T-cell (primary cell): ENCODE measurements at regions of chr12 and their contacts with region 1.

Region 1: GRCh38 chr12:54497883-54498282 is 331 bp downstream of the NCKAP1L start:
- DNase-seq: peak in 1 of 35 experiments; percentile 1
- ATAC-seq: peak in 3 of 4 experiments; percentile 1 to 13 (median 3)
- H3K4me3 ChIP-seq: peak overlapping the region; percentile 62 to 85
- H3K4me3 Mint-ChIP-seq: peak overlapping the region; percentile 97 to 99 (median 98)
- H3K27ac ChIP-seq: peak overlapping the region; percentile 50
- H3K27ac Mint-ChIP-seq: peak overlapping the region; percentile 98
- H3K4me1 ChIP-seq: peaks cover 28 to 30% of the 10 kb centered on the region in 2 experiments
- H3K4me1 Mint-ChIP-seq: peaks cover 45 to 56% (median 49%) of the 10 kb centered on the region in 3 donors
- H3K27me3 ChIP-seq: no peaks in the 10 kb centered on the region
- H3K27me3 Mint-ChIP-seq: no peaks in the 10 kb centered on the region

Region 2: GRCh38 chr12:54214553-54215406 is 283.1 kb before region 1 on chr12:
- CTCF ChIA-PET with region 1: no interaction called
- POLR2A ChIA-PET with region 1: interaction called in 1 of 2 experiments, 10 read pairs
- DNase-seq: peak; percentile 72 to 97 (median 87)
- ATAC-seq: peak; percentile 80 to 91 (median 84)
- H3K4me3 ChIP-seq: peak overlapping the region; percentile 42
- H3K4me3 Mint-ChIP-seq: peak overlapping the region; percentile 64 to 87 (median 73)
- H3K27ac ChIP-seq: no peak overlapping the region
- H3K27ac Mint-ChIP-seq: peak overlapping the region in 1 of 2 donors; percentile 46
- H3K4me1 ChIP-seq: peaks cover 25 to 39% of the 10 kb centered on the region in 2 experiments
- H3K4me1 Mint-ChIP-seq: peaks cover 31 to 51% (median 42%) of the 10 kb centered on the region in 3 donors
- H3K27me3 ChIP-seq: peaks cover 0 to 36% of the 10 kb centered on the region in 2 experiments
- H3K27me3 Mint-ChIP-seq: peaks cover 6 to 19% of the 10 kb centered on the region in 2 donors

Region 3: GRCh38 chr12:54279866-54280467 is 217.9 kb before region 1 on chr12 and contains the start of gene CBX5:
- CTCF ChIA-PET with region 1: interaction called, 6 to 11 read pairs
- POLR2A ChIA-PET with region 1: no interaction called
- DNase-seq: peak; percentile 98 to 100 (median 99)
- ATAC-seq: peak; percentile 55 to 59 (median 56)
- H3K4me3 ChIP-seq: peak within 1 kb of the TSS; percentile 78 to 87
- H3K4me3 Mint-ChIP-seq: no peak within 1 kb of the TSS
- H3K27ac ChIP-seq: peak within 1 kb of the TSS; percentile 98
- H3K27ac Mint-ChIP-seq: no peak within 1 kb of the TSS
- H3K4me1 ChIP-seq: peaks cover 35 to 48% of the 10 kb centered on the region in 2 experiments
- H3K4me1 Mint-ChIP-seq: peaks cover 19 to 51% (median 23%) of the 10 kb centered on the region in 3 donors
- H3K27me3 ChIP-seq: no peaks in the 10 kb centered on the region
- H3K27me3 Mint-ChIP-seq: no peaks in the 10 kb centered on the region
- total RNA-seq, gene CBX5: 43.8 to 54.5 (median 47.1) TPM

Region 4: DNA sequence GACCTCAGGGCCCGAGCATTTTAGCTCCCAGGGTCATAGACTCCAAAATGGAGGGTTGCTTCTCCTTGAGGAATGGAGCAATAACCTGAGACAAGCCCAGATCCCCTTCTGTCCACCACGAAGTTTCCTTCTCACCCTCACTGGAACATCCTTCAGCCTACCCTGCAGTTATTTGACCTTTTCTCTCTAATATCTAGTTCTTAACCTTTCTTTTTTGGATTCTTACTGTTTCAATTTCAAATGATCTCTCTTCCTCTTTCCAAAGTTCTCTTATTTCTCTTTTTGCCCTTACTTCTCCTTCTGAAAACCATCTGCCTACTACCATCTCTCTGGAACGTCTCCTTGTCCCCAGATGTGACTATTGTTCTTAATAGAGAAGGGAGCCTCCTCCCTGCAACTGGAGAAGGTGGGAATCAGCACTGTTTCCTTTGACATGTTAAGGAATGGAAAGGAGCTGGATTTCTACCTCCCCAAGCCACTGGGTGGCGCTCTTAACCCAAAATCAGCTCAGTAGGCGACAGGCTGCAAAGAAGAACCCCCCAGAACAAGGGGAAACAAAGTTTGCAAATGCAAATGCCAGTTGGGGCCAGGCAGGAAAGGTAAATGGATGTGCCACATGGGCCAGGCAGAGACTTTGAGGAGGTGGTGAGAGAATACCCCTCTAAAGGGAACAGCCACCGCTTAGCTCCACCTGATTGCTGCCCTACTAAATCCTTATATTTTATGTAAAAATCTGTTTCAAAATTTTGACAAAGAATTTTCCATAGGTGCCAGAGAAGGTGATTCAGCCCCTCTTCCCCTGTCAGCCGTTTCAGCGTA is 29.1 kb after region 1 on chr12:
- CTCF ChIA-PET with region 1: interaction called, 5 to 10 read pairs
- POLR2A ChIA-PET with region 1: no interaction called
- DNase-seq: peak in 25 of 35 experiments; percentile 3 to 53 (median 22)
- ATAC-seq: peak in 1 of 4 experiments; percentile 40
- H3K4me3 ChIP-seq: no peak overlapping the region
- H3K4me3 Mint-ChIP-seq: no peak overlapping the region
- H3K27ac ChIP-seq: no peak overlapping the region
- H3K27ac Mint-ChIP-seq: no peak overlapping the region
- H3K4me1 ChIP-seq: no peaks in the 10 kb centered on the region
- H3K4me1 Mint-ChIP-seq: peaks cover 0 to 5% (median 0%) of the 10 kb centered on the region in 3 donors
- H3K27me3 ChIP-seq: no peaks in the 10 kb centered on the region
- H3K27me3 Mint-ChIP-seq: no peaks in the 10 kb centered on the region